PC-9 (cell line): ENCODE measurements at regions of chr17 and their contacts with region 1.

Region 1: GRCh38 chr17:39769974-39770587 is 32.3 kb downstream of the GRB7 start:
- DNase-seq: peak; percentile 66 to 99
- H3K4me3 ChIP-seq: no peak overlapping the region
- H3K27ac ChIP-seq: peak overlapping the region; percentile 75
- H3K4me1 ChIP-seq: peaks cover 38% of the 10 kb centered on the region
- H3K27me3 ChIP-seq: no peaks in the 10 kb centered on the region
- CTCF ChIP-seq: no peak

Region 2: DNA sequence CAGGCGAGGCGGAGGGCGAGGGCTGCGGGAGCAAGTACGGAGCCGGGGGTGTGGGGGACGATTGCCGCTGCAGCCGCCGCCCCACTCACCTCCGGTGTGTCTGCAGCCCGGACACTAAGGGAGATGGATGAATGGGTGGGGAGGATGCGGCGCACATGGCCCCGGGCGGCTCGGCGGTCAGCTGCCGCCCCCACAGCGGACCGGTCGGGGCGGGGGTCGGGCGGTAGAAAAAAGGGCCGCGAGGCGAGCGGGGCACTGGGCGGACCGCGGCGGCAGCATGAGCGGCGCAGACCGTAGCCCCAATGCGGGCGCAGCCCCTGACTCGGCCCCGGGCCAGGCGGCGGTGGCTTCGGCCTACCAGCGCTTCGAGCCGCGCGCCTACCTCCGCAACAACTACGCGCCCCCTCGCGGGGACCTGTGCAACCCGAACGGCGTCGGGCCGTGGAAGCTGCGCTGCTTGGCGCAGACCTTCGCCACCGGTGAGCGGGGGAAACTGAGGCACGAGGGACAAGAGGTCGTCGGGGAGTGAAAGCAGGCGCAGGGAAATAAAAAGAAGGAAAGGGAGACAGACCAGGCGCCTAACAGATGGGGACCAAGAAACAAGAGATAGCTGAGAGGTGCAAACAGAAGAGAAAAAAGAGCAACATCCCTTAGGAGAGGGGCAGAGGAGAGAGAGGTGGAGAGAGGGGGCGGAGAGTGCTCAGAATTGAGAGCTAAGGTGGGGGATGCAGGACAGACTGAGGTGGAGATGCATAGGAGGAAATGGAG is 101.7 kb before region 1 on chr17 and contains the start of gene PNMT:
- CTCF ChIA-PET with region 1: no interaction called
- POLR2A ChIA-PET with region 1: no interaction called
- intact Hi-C with region 1: no loop called
- DNase-seq: peak in 1 of 2 experiments; percentile 58
- H3K4me3 ChIP-seq: peak within 1 kb of the TSS; percentile 51
- H3K27ac ChIP-seq: no peak within 1 kb of the TSS
- H3K4me1 ChIP-seq: peaks cover 35% of the 10 kb centered on the region
- H3K27me3 ChIP-seq: no peaks in the 10 kb centered on the region
- CTCF ChIP-seq: peak; percentile 63; the same call in 1 of the 2 replicates
- total RNA-seq, gene PNMT: 0.75 and 1.1 TPM in 2 replicates

Region 3: GRCh38 chr17:39782485-39782884 is 12.4 kb after region 1 on chr17:
- CTCF ChIA-PET with region 1: interaction called, 3 read pairs
- POLR2A ChIA-PET with region 1: interaction called, 7 read pairs
- intact Hi-C with region 1: loop called (anchors 1 kb)
- DNase-seq: peak; percentile 41 to 94
- H3K4me3 ChIP-seq: peak overlapping the region; percentile 4; the same call in 1 of the 2 replicates
- H3K27ac ChIP-seq: peak overlapping the region; percentile 45
- H3K4me1 ChIP-seq: peaks cover 34% of the 10 kb centered on the region
- H3K27me3 ChIP-seq: no peaks in the 10 kb centered on the region
- CTCF ChIP-seq: no peak

Region 4: GRCh38 chr17:39927101-39927928 is 157.2 kb after region 1 on chr17 and contains the starts of genes LRRC3C and ORMDL3:
- CTCF ChIA-PET with region 1: no interaction called
- POLR2A ChIA-PET with region 1: no interaction called
- intact Hi-C with region 1: loop called (anchors 5 kb)
- DNase-seq: peak; percentile 77 to 88
- H3K4me3 ChIP-seq: peak within 1 kb of the TSS; percentile 98
- H3K27ac ChIP-seq: peak within 1 kb of the TSS; percentile 89
- H3K4me1 ChIP-seq: peaks cover 35% of the 10 kb centered on the region
- H3K27me3 ChIP-seq: no peaks in the 10 kb centered on the region
- CTCF ChIP-seq: no peak
- total RNA-seq, gene LRRC3C: not detected in 2 replicates
- total RNA-seq, gene ORMDL3: 51.1 and 68.1 TPM in 2 replicates